ENCODE measurements at regions of chr17 and their contacts with region 1.

Region 1: DNA sequence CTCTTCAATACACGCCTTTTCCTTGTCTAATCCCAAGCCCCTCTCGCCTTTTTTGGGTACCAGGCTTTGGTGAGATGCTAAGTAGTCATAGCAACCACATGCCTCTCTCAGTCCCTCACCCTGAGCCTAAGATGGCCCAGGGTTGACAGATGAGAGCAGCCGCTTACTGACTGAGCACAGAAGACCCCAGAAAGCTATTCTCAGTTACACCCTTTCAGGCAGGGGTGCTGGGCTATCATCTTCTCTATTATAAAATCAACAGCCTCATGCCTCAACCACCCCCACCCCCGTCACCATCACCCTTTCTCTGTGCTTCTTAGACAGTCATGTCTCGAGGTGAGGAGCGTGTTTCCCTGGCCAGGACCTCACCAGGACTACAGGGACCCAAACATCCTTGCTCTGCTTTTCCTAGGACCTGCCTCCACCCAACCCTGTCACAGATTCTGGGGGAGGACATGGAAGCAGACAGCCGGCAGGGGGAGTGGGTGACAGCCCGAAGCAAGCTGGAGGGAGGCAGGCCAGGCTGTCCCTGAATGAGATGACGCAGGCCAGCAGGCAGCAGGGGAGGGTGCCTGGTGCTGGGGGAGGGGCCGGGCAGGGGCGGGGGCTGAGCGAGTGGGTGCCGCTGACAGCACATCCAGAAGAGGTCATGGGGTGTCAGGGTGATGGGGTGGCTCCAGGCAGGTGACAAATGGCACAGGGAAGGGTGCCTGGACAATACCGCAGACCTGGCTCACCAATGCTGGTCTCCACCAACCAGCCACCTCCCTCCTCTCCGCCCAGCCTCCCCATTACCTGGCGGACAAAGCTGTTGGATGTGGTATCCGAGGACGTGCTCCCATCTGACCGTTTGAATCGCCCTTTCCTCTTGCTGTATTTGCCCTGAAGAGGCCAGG is 3.1 kb downstream of the CACNB1 start:
- DNase-seq: peak; percentile 60 to 91
- H3K4me3 ChIP-seq: peak overlapping the region; percentile 35 to 90
- H3K27ac ChIP-seq: peak overlapping the region; percentile 92 to 98
- H3K4me1 ChIP-seq: peaks cover 14 to 41% of the 10 kb centered on the region in 2 donors
- H3K27me3 ChIP-seq: no peaks in the 10 kb centered on the region
- CTCF ChIP-seq: peak; percentile 58 to 77 (median 70)

Region 2: GRCh38 chr17:39164675-39165143 is 29.6 kb before region 1 on chr17:
- intact Hi-C with region 1: loop called (anchors 2 kb)
- DNase-seq: peak; percentile 69 to 95
- H3K4me3 ChIP-seq: peak overlapping the region; percentile 56 to 66
- H3K27ac ChIP-seq: peak overlapping the region; percentile 11 to 31
- H3K4me1 ChIP-seq: peaks cover 7 to 10% of the 10 kb centered on the region in 2 donors
- H3K27me3 ChIP-seq: no peaks in the 10 kb centered on the region
- CTCF ChIP-seq: peak; percentile 78 to 88 (median 83)

Region 3: GRCh38 chr17:39244600-39245570 is 50.5 kb after region 1 on chr17:
- intact Hi-C with region 1: loop called (anchors 2 kb)
- DNase-seq: peak in 1 of 2 donors; percentile 95
- H3K4me3 ChIP-seq: no peak overlapping the region
- H3K27ac ChIP-seq: no peak overlapping the region
- H3K4me1 ChIP-seq: peaks cover 0 to 4% of the 10 kb centered on the region in 2 donors
- H3K27me3 ChIP-seq: no peaks in the 10 kb centered on the region
- CTCF ChIP-seq: peak; percentile 81 to 94 (median 89)

Measured in ascending aorta (tissue), 2 donors.